ENCODE measurements at regions of chr16 and their contacts with region 1.

Region 1: DNA sequence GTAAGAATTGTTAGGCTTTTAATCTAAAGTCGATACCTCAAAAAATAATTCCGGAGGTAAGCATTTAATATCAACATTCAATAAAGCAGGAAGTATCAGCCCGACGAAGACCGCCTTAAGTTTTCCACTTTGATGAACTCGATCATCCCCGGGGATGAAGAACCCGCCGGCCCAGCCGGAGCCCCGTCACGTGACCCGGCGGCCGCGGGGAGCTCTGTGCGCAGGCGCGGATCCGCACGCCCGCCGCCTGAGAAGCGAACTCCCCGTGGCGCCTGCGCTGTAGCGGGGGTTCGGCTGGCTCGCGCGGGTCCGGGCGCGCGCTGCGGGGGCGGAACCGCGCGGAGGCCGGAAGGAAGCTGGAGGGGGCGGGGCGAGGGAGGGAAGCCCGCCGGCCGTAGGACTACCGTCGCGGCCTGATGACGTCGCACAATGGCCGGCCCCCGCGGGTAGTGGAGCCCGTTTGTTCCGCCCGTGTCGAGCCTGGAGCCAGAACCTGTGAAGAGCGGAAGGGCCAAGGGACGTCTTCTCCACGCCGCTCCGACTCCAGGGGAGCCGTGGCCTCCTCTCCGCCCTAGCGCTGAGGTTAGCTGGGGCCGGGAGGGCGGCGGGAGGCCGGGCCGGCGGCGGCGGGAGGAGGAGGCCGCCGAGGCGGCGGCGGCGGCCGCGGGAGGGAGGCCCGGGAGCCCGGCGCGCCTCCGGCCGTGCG is at the start of gene ZC3H18:
- DNase-seq: peak; percentile 91
- ATAC-seq: peak; percentile 83
- H3K4me3 ChIP-seq: peak within 1 kb of the TSS; percentile 92 to 100 (median 93)
- H3K27ac ChIP-seq: peak within 1 kb of the TSS; percentile 73
- H3K4me1 ChIP-seq: peaks cover 28% of the 10 kb centered on the region
- H3K27me3 ChIP-seq: no peaks in the 10 kb centered on the region; a peak in 1 of 5 replicates
- CTCF ChIP-seq: no peak
- EP300 ChIP-seq: no peak
- POLR2A ChIP-seq: peak; percentile 80 to 89
- RAD21 ChIP-seq: peak; percentile 11
- total RNA-seq, gene ZC3H18: 19.7 and 27.4 TPM in 2 replicates

Region 2: GRCh38 chr16:88452482-88453216 is 117.5 kb before region 1 on chr16:
- CTCF ChIA-PET with region 1: no interaction called
- POLR2A ChIA-PET with region 1: interaction called, 14 read pairs
- in situ Hi-C with region 1: no loop called
- intact Hi-C with region 1: no loop called
- DNase-seq: peak; percentile 92
- ATAC-seq: peak; percentile 76
- H3K4me3 ChIP-seq: peak overlapping the region; percentile 64 to 77 (median 76); a peak in 4 of 6 replicates
- H3K27ac ChIP-seq: peak overlapping the region; percentile 51
- H3K4me1 ChIP-seq: peaks cover 26% of the 10 kb centered on the region
- H3K27me3 ChIP-seq: peaks cover 8 to 45% of the 10 kb centered on the region in 2 experiments; a peak in 4 of 5 replicates
- CTCF ChIP-seq: no peak
- EP300 ChIP-seq: no peak
- POLR2A ChIP-seq: no peak
- RAD21 ChIP-seq: no peak

Region 3: DNA sequence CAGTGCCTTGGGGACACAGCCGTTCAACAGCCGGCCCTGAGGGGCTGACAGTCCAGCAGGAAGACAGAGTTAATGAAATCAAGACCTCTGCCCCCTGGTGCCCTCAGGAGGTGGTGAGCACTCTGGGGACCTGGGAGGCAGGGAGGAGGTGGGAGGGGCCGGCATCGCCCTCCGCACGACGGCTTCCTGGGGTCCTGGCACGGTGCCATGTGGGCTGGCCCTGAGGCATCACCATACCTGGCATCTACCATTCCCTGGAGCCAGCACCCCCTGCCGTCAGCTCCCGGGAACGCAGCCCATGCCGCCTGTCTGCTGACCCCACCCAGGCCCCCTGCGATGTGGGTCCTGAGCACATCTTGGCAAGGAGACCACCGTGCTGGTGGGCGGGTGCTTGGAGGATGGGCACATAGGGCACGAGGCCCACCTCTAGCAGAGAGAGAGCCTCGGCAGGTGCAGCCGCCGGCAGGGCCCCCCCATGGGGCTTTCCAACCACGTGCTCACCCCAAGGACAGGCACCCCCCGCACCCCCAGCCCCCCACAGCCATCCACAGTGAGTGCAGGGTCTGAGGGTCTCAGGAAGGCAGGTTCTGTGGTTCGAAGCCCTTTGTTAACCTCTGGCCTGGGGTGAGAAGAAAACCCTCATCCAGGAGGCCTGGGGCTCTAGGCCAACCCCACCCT is 64.6 kb before region 1 on chr16:
- CTCF ChIA-PET with region 1: no interaction called
- POLR2A ChIA-PET with region 1: interaction called, 14 read pairs
- in situ Hi-C with region 1: no loop called
- intact Hi-C with region 1: no loop called
- DNase-seq: peak; percentile 79
- ATAC-seq: peak; percentile 21
- H3K4me3 ChIP-seq: peak overlapping the region; percentile 19 to 56 (median 32); a peak in 4 of 6 replicates
- H3K27ac ChIP-seq: peak overlapping the region; percentile 92
- H3K4me1 ChIP-seq: peaks cover 75% of the 10 kb centered on the region
- H3K27me3 ChIP-seq: no peaks in the 10 kb centered on the region
- CTCF ChIP-seq: peak; percentile 82
- EP300 ChIP-seq: no peak
- POLR2A ChIP-seq: no peak
- RAD21 ChIP-seq: peak; percentile 86

Region 4: GRCh38 chr16:88533932-88534732 is 36.0 kb before region 1 on chr16:
- CTCF ChIA-PET with region 1: no interaction called
- POLR2A ChIA-PET with region 1: no interaction called
- in situ Hi-C with region 1: no loop called
- intact Hi-C with region 1: no loop called
- DNase-seq: no peak
- ATAC-seq: no peak
- H3K4me3 ChIP-seq: no peak overlapping the region
- H3K27ac ChIP-seq: no peak overlapping the region
- H3K4me1 ChIP-seq: peaks cover 8% of the 10 kb centered on the region
- H3K27me3 ChIP-seq: peaks cover 4 to 12% of the 10 kb centered on the region in 2 experiments; a peak in 4 of 5 replicates
- CTCF ChIP-seq: no peak
- EP300 ChIP-seq: no peak
- POLR2A ChIP-seq: no peak
- RAD21 ChIP-seq: no peak

Region 5: DNA sequence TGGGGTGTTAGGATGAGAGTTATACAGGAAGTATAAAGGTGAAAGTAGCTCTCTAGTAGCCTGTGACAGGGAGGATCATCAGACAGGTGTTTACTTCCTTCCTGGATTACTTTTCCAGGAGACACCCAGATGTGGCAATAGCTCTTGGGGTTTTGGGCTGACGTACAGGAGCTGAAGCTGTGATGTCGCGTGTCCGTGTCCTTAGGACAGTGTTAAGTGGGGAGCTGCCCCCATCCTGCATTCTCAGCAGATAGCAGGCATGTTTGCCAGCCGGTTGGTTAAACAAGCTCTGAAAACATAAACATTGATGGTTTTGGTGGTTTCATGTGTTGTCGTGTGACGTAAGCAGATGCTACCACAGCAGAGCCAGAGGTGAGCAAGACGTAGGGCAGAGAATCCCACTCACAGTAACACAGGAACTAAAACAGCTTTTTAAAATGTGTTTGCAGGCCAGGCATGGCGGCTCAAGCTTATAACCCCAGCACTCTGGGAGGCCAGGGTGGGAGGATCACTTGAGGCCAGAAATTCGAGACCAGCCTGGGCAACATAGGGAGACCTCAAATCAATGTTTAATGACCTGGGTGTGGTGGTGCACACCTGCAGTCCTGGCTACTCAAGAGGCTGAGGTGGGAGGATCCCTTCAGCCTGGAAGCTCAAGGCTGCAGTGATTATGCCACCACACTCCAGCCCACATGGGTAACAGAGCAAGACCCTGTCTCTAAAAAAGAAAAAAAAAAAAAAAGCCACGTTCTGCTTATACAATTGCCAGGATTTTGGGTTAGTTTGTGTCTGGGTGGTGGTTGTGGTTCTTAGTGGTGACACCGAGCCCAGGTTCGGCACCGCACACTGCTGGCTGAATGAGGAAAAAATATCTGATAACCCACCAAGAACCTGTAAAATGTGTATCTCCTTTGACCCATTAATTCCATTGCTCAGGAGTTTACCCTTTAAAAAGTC is 50.0 kb after region 1 on chr16:
- CTCF ChIA-PET with region 1: no interaction called
- POLR2A ChIA-PET with region 1: interaction called, 16 read pairs
- in situ Hi-C with region 1: no loop called
- intact Hi-C with region 1: no loop called
- DNase-seq: no peak
- ATAC-seq: no peak
- H3K4me3 ChIP-seq: no peak overlapping the region
- H3K27ac ChIP-seq: peak overlapping the region; percentile 65
- H3K4me1 ChIP-seq: peaks cover 36% of the 10 kb centered on the region
- H3K27me3 ChIP-seq: no peaks in the 10 kb centered on the region
- CTCF ChIP-seq: no peak
- EP300 ChIP-seq: no peak
- POLR2A ChIP-seq: no peak
- RAD21 ChIP-seq: no peak